Activated T-helper 1 cell treated with anti-CD3 and anti-CD28 coated beads, Interleukin-12 subunit alpha, Interleukin-12 subunit beta, Interleukin-2, Interleukin-4 antibody, amounts not matched to agents 30 ng/mL and 10 ng/mL and 1 ng/mL, durations not matched to agents 14 hours and 24 hours and 36 hours (primary cell): ENCODE measurements at regions of chr1 and their contacts with region 1.

Region 1: GRCh38 chr1:28199328-28200233 is 23.1 kb upstream of the PTAFR start:
- DNase-seq: peak; percentile 79
- H3K4me3 Mint-ChIP-seq: peak overlapping the region; percentile 78
- H3K27ac Mint-ChIP-seq: peak overlapping the region; percentile 93
- H3K4me1 Mint-ChIP-seq: peaks cover 53% of the 10 kb centered on the region
- H3K27me3 Mint-ChIP-seq: no peaks in the 10 kb centered on the region

Region 2: GRCh38 chr1:27891196-27891889 is 308.2 kb before region 1 on chr1:
- intact Hi-C with region 1: loop called (anchors 2 kb)
- DNase-seq: peak; percentile 62
- H3K4me3 Mint-ChIP-seq: peak overlapping the region; percentile 63
- H3K27ac Mint-ChIP-seq: peak overlapping the region; percentile 95
- H3K4me1 Mint-ChIP-seq: peaks cover 66% of the 10 kb centered on the region
- H3K27me3 Mint-ChIP-seq: no peaks in the 10 kb centered on the region

Region 3: DNA sequence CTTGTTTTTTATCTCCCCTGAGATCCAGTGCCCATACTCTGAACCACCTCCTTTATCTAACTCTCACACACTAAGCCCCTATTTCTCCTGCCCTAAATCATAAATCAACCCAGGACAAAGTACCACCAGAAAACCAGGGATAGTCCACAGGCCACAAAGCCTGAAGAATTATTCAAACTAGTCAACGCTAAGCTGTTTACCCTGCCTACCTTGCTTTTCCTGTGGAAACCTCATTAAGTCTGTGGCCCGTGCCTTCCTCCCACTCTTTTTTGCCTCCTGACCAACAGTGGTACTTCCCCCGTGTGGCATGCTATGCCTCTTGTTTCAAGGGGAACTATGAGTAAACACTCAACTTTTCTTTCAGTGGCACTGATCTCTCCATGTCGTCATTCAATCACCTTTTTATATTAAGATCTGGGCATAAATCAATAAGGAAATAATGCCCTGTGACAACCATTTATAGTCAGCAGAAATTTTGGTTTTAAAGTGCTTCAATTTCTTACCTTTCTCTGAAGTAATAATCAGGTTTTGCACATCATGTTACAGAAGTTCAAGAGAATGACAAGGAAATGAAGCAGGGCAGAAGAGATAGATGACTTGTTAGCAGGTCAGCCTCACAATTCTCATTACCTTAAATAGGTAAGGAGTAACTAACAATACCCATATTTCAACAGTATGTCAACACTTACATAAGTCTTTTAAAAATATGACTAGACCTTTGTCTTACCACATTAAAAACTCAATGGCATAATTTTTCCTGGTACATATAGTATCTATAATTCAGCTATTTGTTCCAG is 143.3 kb before region 1 on chr1:
- intact Hi-C with region 1: loop called (anchors 1 kb)
- DNase-seq: peak; percentile 51
- H3K4me3 Mint-ChIP-seq: peak overlapping the region; percentile 21
- H3K27ac Mint-ChIP-seq: peak overlapping the region; percentile 86
- H3K4me1 Mint-ChIP-seq: peaks cover 34% of the 10 kb centered on the region
- H3K27me3 Mint-ChIP-seq: no peaks in the 10 kb centered on the region

Region 4: GRCh38 chr1:28112388-28113241 is 87.0 kb before region 1 on chr1:
- intact Hi-C with region 1: loop called (anchors 1 kb)
- DNase-seq: no peak
- H3K4me3 Mint-ChIP-seq: no peak overlapping the region
- H3K27ac Mint-ChIP-seq: no peak overlapping the region
- H3K4me1 Mint-ChIP-seq: peaks cover 37% of the 10 kb centered on the region
- H3K27me3 Mint-ChIP-seq: peaks cover 11% of the 10 kb centered on the region

Region 5: DNA sequence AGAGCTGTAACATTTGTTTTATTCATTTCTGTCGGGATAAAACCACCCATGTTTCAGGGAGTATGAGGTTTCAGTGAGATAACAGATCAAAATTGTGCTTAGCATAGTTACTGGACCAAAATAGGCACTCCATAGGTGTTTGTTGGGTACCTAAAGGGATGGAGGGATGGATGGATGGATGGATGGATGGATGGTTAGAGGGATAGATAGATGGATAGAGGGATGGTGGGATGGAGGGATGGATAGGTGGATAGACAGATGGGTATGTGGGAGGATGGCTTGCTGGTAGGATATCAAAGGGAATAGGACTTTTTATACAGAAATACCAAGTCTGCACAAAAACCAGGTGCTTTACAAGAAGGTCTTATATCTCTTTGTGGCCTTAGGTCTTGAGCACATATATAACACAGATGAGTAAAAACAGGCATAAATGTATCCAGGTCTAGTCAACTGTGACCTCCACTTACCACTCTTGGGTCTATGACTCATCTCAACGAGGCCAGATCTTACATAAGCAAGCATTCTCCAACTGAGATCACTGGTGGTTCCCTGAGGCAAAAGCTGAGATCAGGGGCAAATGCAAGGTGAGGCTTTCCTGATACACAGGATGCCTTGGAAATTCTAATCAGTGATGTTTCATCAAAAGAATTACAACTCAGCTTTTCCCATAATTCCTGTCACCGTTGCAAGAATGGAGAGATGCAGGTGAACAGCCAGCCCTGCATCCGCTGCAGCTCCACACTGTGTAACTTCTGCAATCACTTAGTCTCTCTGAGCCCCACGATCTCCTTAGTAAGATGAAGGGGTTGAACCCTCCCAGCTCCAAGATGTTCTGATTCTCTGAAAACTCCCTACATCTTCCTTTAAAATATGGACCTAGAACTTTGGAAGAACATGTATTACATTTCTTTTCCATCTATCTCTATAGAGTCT is 55.1 kb before region 1 on chr1:
- intact Hi-C with region 1: loop called (anchors 1 kb)
- DNase-seq: peak; percentile 30
- H3K4me3 Mint-ChIP-seq: no peak overlapping the region
- H3K27ac Mint-ChIP-seq: no peak overlapping the region
- H3K4me1 Mint-ChIP-seq: peaks cover 26% of the 10 kb centered on the region
- H3K27me3 Mint-ChIP-seq: peaks cover 36% of the 10 kb centered on the region

Region 6: DNA sequence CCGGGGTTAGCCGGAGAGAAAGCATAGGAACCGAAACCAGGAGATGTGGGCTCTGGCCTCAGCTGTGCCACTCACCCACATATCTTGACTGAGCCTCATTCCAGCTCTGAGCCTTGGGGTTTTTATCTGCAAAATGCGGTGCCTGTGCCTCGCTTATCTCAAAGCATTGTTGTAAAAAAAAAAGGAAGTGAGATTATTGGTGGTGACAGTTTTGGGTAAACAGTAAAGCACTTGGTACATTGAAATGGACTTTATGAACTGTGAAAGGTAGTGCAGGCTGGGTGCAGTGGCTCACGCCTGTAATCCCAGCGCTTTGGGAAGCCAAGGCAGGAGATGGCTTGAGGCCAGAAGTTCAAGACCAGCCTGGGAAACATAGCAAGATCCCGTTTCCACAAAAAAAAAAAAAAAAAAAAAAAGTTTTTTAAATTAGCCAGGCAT is 26.8 kb before region 1 on chr1:
- intact Hi-C with region 1: loop called (anchors 1 kb)
- DNase-seq: peak; percentile 51
- H3K4me3 Mint-ChIP-seq: peak overlapping the region; percentile 40
- H3K27ac Mint-ChIP-seq: peak overlapping the region; percentile 37
- H3K4me1 Mint-ChIP-seq: peaks cover 59% of the 10 kb centered on the region
- H3K27me3 Mint-ChIP-seq: peaks cover 45% of the 10 kb centered on the region

Region 7: DNA sequence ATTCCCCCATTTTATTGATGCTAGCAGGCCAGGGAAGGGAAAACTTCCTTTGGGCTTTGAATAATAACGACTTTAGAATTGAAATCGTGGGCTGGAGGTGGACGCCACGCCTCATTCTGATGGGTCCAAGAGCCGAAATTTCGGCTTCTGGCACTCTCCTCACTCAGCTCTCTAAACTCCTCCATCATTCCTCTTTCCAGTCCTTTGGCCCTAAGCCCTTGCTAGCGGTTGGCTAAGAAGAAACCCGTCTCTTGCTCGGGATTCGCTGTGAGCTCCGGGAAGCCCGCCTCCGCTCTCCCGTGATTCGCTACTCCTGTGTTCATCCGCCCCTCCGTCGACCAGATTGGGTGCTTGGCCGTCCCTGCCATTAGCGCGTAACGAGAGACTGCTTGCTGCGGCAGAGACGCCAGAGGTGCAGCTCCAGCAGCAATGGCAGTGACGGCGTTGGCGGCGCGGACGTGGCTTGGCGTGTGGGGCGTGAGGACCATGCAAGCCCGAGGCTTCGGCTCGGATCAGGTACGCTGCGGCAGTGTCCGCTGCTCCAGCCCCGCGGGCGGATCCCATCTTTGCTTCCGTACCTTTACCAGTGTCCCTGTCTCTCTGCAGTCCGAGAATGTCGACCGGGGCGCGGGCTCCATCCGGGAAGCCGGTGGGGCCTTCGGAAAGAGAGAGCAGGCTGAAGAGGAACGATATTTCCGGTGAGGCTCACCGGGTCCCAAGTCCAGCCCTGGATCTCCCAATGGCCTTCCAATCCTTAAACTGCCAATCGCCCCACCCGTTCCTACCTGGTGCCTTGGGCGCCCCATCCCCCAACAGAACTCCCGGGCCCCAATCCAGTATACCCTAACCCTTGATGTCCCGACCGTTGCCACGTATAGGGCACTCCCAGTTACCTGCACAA is 36.4 kb after region 1 on chr1 and contains the start of gene ATP5IF1:
- intact Hi-C with region 1: loop called (anchors 1 kb)
- DNase-seq: peak; percentile 94
- H3K4me3 Mint-ChIP-seq: no peak within 1 kb of the TSS
- H3K27ac Mint-ChIP-seq: no peak within 1 kb of the TSS
- H3K4me1 Mint-ChIP-seq: peaks cover 11% of the 10 kb centered on the region
- H3K27me3 Mint-ChIP-seq: no peaks in the 10 kb centered on the region
- total RNA-seq, gene ATP5IF1: 128 and 132 TPM in 2 replicates

Region 8: DNA sequence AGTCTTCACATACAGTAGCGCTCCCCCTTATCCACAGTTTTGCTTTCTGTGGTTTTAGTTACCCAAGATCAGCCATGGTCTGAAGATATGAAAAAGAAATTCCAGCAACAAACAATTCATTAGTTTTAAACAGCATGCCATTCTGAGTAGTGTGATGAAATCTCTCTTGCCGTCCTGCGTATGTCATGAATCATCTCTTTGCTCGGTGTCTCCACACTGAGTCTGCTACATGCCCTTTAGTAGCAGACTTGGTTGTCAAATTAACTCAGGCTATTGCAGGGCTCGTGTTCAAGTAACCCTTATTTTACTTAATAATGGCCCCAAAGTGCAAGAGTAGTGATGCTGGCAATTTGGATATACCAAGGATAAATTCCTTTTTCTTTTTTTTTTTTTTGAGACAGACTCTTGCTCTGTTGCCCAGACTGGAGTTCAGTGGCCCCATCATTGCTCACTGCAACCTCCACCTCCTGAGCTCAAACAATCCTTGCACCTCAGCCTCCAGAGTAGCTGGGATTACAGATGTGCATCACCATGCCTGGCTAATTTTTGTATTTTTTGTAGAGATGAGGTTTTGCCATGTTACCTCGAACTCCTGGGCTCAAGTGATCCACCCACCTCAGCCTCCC is 192.6 kb after region 1 on chr1:
- intact Hi-C with region 1: no loop called
- DNase-seq: no peak
- H3K4me3 Mint-ChIP-seq: no peak overlapping the region
- H3K27ac Mint-ChIP-seq: no peak overlapping the region
- H3K4me1 Mint-ChIP-seq: peaks cover 11% of the 10 kb centered on the region
- H3K27me3 Mint-ChIP-seq: no peaks in the 10 kb centered on the region